ENCODE measurements at regions of chr14 and their contacts with region 1.

Region 1: GRCh38 chr14:69191340-69192111 is at the start of gene EXD2:
- DNase-seq: peak; percentile 91
- H3K4me3 Mint-ChIP-seq: peak within 1 kb of the TSS; percentile 93
- H3K27ac Mint-ChIP-seq: peak within 1 kb of the TSS; percentile 76
- H3K4me1 Mint-ChIP-seq: peaks cover 23% of the 10 kb centered on the region
- H3K27me3 Mint-ChIP-seq: no peaks in the 10 kb centered on the region
- total RNA-seq, gene EXD2: 11.8 to 12.7 TPM

Region 2: DNA sequence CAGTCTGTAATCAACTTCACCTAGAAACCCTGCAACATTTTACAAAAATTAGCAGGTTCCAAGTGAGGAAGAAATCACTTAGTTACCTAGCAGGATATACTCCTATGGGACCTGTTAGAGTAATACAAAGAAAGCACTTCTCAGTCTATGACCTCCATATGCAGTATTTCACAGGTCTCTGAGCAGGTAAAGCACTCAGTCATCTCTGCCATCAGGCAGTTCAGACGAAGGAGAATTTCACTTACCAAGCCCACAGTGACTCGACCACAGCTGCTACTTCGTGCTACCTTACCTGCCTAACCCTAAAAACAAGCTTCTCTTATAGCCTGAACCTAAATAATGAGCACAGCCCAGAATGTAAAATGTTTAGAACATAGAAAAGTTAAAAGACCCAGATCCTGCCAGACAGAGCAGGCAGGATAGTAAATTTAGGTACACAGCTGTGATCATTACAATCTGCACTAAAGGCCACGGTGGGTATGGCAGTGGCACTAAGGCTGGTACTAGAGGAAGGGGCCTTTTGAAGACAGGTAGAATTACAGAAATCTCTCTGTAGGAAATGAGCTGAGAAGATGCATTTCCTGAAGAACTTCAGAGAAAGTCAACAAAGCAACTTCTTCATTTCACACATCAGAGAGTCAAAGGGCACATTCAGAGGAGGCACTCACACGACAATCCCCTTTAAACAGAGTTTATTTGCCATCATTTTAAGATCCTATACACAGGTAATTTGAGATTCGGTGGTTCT is 74.3 kb before region 1 on chr14:
- CTCF ChIA-PET with region 1: no interaction called
- intact Hi-C with region 1: no loop called
- DNase-seq: peak; percentile 33
- H3K4me3 Mint-ChIP-seq: no peak overlapping the region
- H3K27ac Mint-ChIP-seq: peak overlapping the region; percentile 57
- H3K4me1 Mint-ChIP-seq: peaks cover 37% of the 10 kb centered on the region
- H3K27me3 Mint-ChIP-seq: no peaks in the 10 kb centered on the region

Region 3: DNA sequence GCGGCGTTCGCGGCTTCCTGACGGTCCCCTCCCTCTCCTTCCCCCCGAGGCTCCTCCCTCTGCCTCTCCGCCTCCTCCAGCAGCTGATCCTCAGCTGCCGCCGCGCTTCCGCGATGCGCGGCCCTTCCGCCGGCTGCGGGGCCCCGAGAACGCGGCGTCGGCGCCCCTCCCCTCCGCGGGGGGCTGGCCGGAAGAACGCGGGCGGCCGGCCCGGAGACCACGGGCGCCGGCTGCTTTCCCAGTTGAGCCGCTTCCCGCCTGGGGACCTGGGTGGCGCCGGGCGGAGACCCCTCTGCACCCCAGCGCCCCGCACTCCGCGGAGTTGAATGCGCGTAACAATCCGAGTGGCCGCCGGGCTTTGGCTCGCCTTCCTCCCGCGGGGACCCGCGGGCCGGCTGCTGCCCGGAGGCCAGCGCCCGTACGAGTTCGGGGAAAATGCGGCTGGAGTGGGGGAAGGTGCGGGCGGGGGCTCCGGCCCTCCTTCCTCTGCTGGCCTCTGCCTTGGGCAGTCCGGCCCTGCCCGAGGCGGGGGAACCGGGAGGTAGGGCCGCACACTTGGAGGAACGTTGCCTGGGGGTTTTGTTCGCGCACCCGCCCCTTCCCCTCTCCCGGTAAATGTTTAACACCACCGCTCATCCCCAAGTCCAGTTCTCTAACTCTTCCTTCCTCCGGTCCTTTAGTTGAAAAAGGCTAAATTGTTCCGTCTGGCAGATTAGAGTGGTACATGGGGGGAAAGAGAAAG is 38.2 kb before region 1 on chr14:
- CTCF ChIA-PET with region 1: interaction called, 6 read pairs
- intact Hi-C with region 1: loop called (anchors 1 kb)
- DNase-seq: peak; percentile 95
- H3K4me3 Mint-ChIP-seq: peak overlapping the region; percentile 82
- H3K27ac Mint-ChIP-seq: peak overlapping the region; percentile 24
- H3K4me1 Mint-ChIP-seq: peaks cover 31% of the 10 kb centered on the region
- H3K27me3 Mint-ChIP-seq: no peaks in the 10 kb centered on the region

Region 4: DNA sequence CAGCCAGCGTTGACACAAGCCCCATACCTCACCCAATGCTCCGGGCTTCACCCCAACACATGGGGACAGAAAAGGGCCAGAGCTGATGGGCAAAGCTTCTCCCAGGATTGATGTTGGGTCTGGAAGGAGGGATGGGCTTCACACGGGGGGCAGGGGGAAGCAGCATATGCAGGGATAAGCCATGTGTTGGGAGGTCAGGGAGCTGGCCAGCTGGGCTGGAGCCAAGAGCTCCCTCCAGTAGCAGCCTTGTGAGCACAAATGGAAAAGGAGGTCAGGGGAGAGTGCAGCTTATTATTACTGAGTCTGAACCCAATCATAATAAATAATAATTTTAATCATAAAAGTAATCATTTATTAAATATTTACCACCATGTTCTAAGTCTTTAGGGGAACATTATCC is 302.3 kb after region 1 on chr14:
- CTCF ChIA-PET with region 1: no interaction called
- intact Hi-C with region 1: no loop called
- DNase-seq: no peak
- H3K4me3 Mint-ChIP-seq: no peak overlapping the region
- H3K27ac Mint-ChIP-seq: no peak overlapping the region
- H3K4me1 Mint-ChIP-seq: no peaks in the 10 kb centered on the region
- H3K27me3 Mint-ChIP-seq: no peaks in the 10 kb centered on the region

Measured in activated naive CD4-positive, alpha-beta T cell treated with anti-CD3 and anti-CD28 coated beads for 36 hours (primary cell).